ENCODE measurements at regions of chr3 and their contacts with region 1.

Region 1: GRCh38 chr3:4712143-4712542 is 219.0 kb downstream of the ITPR1 start:
- DNase-seq: peak; percentile 78
- H3K4me3 ChIP-seq: no peak overlapping the region
- CTCF ChIP-seq: no peak

Region 2: DNA sequence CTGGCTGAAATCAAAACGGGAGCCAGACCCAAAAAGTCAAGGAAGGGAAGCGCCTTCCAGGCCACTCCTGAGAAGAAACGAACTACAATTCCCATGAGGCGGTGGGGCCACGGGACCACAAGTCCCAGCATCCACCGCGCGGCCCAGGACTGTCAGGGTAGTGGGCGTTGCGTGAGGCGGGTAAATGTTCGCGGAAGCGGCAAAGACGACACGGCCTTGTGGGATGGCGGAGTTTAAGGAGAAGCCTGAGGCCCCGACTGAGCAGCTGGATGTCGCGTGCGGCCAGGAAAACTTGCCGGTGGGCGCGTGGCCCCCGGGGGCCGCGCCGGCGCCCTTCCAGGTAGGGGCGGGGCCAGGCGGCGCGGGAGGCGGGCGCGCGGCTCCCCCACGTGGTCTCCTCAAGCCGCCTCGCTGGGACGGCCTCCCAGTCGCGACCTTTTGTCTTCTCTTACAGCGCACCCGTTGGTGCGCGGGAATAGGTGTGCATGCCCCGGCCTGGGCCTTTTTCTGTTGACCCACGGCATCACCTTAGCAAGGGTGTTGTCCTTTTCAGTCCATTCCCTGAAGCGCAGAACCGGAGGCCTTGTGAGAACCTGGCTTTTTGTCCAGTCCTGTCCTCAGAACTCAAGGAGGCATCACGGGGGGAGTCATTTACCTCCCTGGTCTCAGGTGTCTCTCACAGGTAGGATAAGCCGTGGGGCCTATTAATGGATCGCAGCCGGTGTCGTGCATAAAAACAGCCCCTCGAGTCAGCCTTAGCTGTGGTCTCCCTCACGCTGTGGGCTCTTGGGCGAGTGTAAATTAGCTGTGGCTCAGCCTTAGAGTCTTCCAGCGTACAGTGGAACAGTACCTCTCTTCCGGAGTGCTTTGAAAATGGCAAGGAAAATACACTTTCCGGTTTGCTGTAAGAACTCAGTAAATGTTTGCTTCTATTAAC is 408.7 kb before region 1 on chr3 and contains the start of gene SETMAR:
- in situ Hi-C with region 1: no loop called
- DNase-seq: peak; percentile 72
- H3K4me3 ChIP-seq: peak within 1 kb of the TSS; percentile 70
- CTCF ChIP-seq: no peak

Region 3: DNA sequence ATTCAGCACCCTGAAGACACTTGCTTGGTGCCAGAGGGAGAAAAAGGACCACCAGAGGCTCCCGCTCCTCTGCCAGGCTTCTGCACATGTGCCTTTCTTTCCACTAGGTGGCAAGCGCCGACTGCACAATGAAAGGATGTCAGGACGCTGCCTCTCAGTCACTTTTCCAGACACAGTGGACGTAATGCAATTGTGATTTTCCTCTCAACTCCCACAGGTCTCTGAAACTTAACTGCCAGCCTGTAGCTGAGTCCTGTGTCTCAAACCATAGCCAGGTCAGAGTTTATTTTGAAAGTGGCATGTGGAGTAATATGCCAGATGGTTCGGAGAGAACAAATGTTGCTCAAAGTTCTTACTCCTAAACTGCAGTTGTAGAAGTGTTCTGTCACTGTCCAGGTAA is 56.1 kb before region 1 on chr3:
- in situ Hi-C with region 1: no loop called
- DNase-seq: peak; percentile 75
- H3K4me3 ChIP-seq: no peak overlapping the region
- CTCF ChIP-seq: peak; percentile 96

Region 4: GRCh38 chr3:4834403-4834866 is 122.3 kb after region 1 on chr3:
- in situ Hi-C with region 1: no loop called
- DNase-seq: no peak
- H3K4me3 ChIP-seq: no peak overlapping the region
- CTCF ChIP-seq: no peak

Region 5: GRCh38 chr3:5041315-5041714 is 329.2 kb after region 1 on chr3:
- in situ Hi-C with region 1: loop called (anchors 5 kb)
- DNase-seq: no peak
- H3K4me3 ChIP-seq: no peak overlapping the region
- CTCF ChIP-seq: no peak

Region 6: DNA sequence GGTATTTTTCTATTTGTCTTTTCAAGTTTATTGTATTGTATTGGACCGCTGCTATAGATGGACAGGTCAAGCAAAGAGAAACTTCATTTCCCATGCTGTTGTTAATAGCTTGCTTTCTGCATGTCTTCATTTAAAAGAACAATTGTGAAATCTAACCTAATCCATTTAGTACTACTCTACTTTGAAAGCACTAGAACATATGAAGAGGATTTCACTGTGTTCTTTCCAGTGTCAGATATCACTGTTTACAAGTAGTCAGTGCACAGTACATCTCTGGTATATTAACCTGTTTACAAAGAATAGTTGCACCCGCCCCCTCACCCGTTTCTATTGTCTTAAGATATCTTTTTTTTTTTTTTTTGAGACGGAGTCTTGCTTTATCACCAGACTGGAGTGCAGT is 453.6 kb after region 1 on chr3:
- in situ Hi-C with region 1: loop called (anchors 5 kb)
- DNase-seq: no peak
- H3K4me3 ChIP-seq: no peak overlapping the region
- CTCF ChIP-seq: no peak

Measured in astrocyte of the cerebellum (primary cell).